CD8-positive, alpha-beta memory T cell (primary cell): ENCODE measurements at regions of chr2 and their contacts with region 1.

Region 1: GRCh38 chr2:85635636-85636035 is 19.6 kb downstream of the USP39 start:
- DNase-seq: no peak
- H3K4me3 ChIP-seq: no peak overlapping the region
- H3K4me3 Mint-ChIP-seq: no peak overlapping the region
- H3K27ac ChIP-seq: no peak overlapping the region
- H3K27ac Mint-ChIP-seq: peak overlapping the region in 3 of 8 donors; percentile 3 to 84 (median 27)
- H3K4me1 ChIP-seq: no peaks in the 10 kb centered on the region
- H3K4me1 Mint-ChIP-seq: peaks cover 20 to 27% (median 26%) of the 10 kb centered on the region in 3 donors
- H3K27me3 ChIP-seq: no peaks in the 10 kb centered on the region
- H3K27me3 Mint-ChIP-seq: no peaks in the 10 kb centered on the region

Region 2: GRCh38 chr2:85619617-85620016 is 16.0 kb before region 1 on chr2:
- CTCF ChIA-PET with region 1: interaction called, 27 read pairs
- POLR2A ChIA-PET with region 1: interaction called, 3 read pairs
- DNase-seq: no peak
- H3K4me3 ChIP-seq: no peak overlapping the region
- H3K4me3 Mint-ChIP-seq: no peak overlapping the region
- H3K27ac ChIP-seq: no peak overlapping the region
- H3K27ac Mint-ChIP-seq: peak overlapping the region in 1 of 8 donors; percentile 24
- H3K4me1 ChIP-seq: peaks cover 21% of the 10 kb centered on the region
- H3K4me1 Mint-ChIP-seq: peaks cover 21 to 39% (median 29%) of the 10 kb centered on the region in 3 donors
- H3K27me3 ChIP-seq: no peaks in the 10 kb centered on the region
- H3K27me3 Mint-ChIP-seq: peaks cover 0 to 2% of the 10 kb centered on the region in 2 donors

Region 3: DNA sequence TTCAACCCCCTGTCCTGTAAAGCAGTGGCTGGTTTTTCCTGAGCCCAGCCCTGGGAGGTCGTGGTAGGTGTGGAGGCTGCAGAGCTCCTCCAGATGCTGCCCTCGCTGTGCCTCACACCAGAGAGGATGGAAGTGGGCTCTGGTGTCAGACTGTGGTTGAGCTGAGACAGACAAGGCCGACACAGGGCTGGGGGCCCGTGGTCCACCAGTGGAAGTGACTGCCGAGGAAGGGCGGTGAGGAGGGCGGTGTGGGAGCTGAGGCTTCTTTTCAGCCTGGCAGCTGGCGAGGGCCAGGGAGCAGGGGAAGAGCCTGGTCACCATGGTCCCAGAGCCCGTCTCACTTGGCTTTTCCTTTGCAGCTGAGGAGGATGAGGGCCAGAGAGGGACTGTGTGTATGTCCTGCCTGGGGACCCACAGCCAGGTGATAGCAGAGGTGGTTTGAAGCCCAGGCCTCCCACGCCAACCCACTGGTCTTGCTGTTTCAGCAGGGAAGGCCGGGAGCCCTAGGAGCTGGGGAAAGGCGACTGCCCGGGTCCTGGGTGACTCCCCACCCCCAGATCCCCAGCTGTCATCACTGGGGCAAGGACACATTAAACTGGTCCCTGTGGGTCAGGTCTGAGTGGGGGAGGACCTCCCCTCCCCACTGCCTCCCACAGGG is 23.8 kb after region 1 on chr2:
- CTCF ChIA-PET with region 1: interaction called, 15 read pairs
- POLR2A ChIA-PET with region 1: no interaction called
- DNase-seq: no peak
- H3K4me3 ChIP-seq: no peak overlapping the region
- H3K4me3 Mint-ChIP-seq: no peak overlapping the region
- H3K27ac ChIP-seq: no peak overlapping the region
- H3K27ac Mint-ChIP-seq: peak overlapping the region in 2 of 8 donors; percentile 32 to 60
- H3K4me1 ChIP-seq: no peaks in the 10 kb centered on the region
- H3K4me1 Mint-ChIP-seq: peaks cover 4 to 7% (median 6%) of the 10 kb centered on the region in 3 donors
- H3K27me3 ChIP-seq: no peaks in the 10 kb centered on the region
- H3K27me3 Mint-ChIP-seq: no peaks in the 10 kb centered on the region

Region 4: DNA sequence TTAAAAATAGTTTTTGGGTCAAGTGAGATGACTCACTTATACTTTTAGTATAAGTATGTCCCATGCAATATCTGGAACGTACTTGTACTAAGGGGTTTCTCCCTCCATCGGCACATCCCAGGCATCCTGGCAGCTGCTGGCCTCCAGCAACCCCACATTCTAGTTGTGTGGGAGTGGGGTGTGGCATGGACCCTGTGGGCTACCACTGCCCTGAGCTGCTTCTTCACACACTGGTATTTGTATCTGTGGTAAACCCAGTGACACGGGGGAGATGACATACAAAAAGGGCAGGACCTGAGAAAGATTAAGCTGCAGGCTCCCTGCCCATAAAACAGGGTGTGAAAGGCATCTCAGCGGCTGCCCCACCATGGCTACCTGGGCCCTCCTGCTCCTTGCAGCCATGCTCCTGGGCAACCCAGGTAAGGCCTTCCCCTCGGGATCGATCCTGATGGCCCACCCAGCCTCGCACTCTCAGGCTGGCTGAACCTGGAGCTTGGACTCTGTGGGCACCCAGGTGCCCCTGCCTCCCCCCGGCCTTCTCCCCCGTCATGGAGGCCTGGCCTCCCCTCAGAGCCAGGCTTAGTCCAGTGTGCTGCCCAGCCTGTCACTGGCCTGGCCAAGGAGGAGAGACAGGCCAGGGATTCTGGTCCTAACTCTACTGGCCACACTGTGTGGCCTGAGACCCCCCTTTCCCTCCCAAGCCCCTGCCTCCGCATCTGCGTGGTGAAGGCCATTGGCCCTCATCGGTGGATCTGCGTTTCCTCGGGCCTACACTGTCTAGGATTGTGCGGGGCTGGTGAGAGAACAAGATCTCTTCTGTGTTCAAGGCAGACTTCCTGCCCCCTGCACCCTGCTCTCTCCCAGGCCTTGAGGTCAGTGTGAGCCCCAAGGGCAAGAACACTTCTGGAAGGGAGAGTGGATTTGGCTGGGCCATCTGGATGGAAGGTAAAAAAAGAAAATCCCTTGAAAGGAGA is 58.7 kb after region 1 on chr2 and contains the start of gene GNLY:
- CTCF ChIA-PET with region 1: no interaction called
- POLR2A ChIA-PET with region 1: no interaction called
- DNase-seq: peak in 1 of 5 donors; percentile 41
- H3K4me3 ChIP-seq: no peak within 1 kb of the TSS
- H3K4me3 Mint-ChIP-seq: peak within 1 kb of the TSS in 6 of 7 donors; percentile 66 to 92 (median 78)
- H3K27ac ChIP-seq: no peak within 1 kb of the TSS
- H3K27ac Mint-ChIP-seq: peak within 1 kb of the TSS in 7 of 8 donors; percentile 16 to 93 (median 86)
- H3K4me1 ChIP-seq: no peaks in the 10 kb centered on the region
- H3K4me1 Mint-ChIP-seq: peaks cover 0 to 8% (median 0%) of the 10 kb centered on the region in 3 donors
- H3K27me3 ChIP-seq: no peaks in the 10 kb centered on the region
- H3K27me3 Mint-ChIP-seq: peaks cover 4 to 5% of the 10 kb centered on the region in 2 donors
- total RNA-seq, gene GNLY: 7.7 to 9.0 TPM

Region 5: GRCh38 chr2:85707304-85707703 is 71.7 kb after region 1 on chr2:
- CTCF ChIA-PET with region 1: interaction called, 30 read pairs
- POLR2A ChIA-PET with region 1: no interaction called
- DNase-seq: peak; percentile 38 to 63 (median 58)
- H3K4me3 ChIP-seq: no peak overlapping the region
- H3K4me3 Mint-ChIP-seq: peak overlapping the region in 2 of 7 donors; percentile 16 to 35
- H3K27ac ChIP-seq: no peak overlapping the region
- H3K27ac Mint-ChIP-seq: peak overlapping the region in 5 of 8 donors; percentile 72 to 92 (median 85)
- H3K4me1 ChIP-seq: peaks cover 7% of the 10 kb centered on the region
- H3K4me1 Mint-ChIP-seq: peaks cover 19 to 49% (median 28%) of the 10 kb centered on the region in 3 donors
- H3K27me3 ChIP-seq: no peaks in the 10 kb centered on the region
- H3K27me3 Mint-ChIP-seq: peaks cover 11 to 21% of the 10 kb centered on the region in 2 donors

Region 6: GRCh38 chr2:85819811-85820510 is 184.3 kb after region 1 on chr2:
- CTCF ChIA-PET with region 1: no interaction called
- POLR2A ChIA-PET with region 1: no interaction called
- DNase-seq: no peak
- H3K4me3 ChIP-seq: no peak overlapping the region
- H3K4me3 Mint-ChIP-seq: no peak overlapping the region
- H3K27ac ChIP-seq: no peak overlapping the region
- H3K27ac Mint-ChIP-seq: peak overlapping the region in 1 of 8 donors; percentile 26
- H3K4me1 ChIP-seq: no peaks in the 10 kb centered on the region
- H3K4me1 Mint-ChIP-seq: no peaks in the 10 kb centered on the region
- H3K27me3 ChIP-seq: no peaks in the 10 kb centered on the region
- H3K27me3 Mint-ChIP-seq: peaks cover 8 to 20% of the 10 kb centered on the region in 2 donors